Posterior cingulate gyrus (tissue), 11 donors: ENCODE measurements at regions of chr16 and their contacts with region 1.

Region 1: DNA sequence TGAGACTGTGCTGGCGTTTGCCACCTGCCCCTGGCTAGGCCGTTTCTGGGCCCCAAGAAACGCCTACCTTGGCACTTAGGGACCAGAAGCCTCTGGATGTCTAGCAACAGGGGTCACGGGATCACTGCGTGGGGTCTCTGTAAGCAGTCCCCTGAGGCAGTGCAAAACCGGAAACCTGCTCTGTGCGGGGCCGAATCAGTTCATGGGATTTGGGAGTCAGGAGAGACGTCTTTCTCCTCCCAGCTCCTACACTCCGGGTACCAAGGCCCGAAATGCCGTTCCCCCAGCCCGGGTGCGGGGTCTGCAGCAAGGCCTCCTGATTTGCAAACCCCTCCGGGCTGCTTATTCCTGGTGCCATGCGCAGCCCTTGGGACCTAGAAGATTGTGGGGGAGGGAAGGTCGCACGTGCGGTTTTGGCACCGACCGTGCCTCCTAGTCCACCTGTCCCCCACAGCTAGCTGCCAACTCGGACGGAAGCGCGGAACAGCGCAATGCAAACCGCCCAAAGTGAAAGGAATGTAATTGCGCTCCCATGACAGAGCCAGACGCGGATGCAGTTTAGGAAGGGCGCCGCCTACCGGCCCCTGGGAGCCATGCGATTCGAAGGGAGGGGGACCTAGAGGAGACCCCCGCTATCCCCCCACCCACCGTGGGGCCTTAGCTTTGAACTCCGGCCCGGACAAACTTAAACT is 6.5 kb downstream of the IRX5 start:
- DNase-seq: peak in 1 of 10 donors; percentile 74

Region 2: GRCh38 chr16:54987081-54987480 is 50.0 kb after region 1 on chr16:
- intact Hi-C with region 1: loop called (anchors 5 kb)
- DNase-seq: peak; percentile 26 to 94 (median 66)